ENCODE measurements at regions of chr12 and their contacts with region 1.

Region 1: GRCh38 chr12:57832966-57833365 is 13.6 kb downstream of the CTDSP2 start:
- DNase-seq: no peak
- H3K4me3 ChIP-seq: peak overlapping the region; percentile 7 to 26 (median 18)
- H3K27ac ChIP-seq: peak overlapping the region; percentile 15 to 100 (median 70)
- H3K4me1 ChIP-seq: peaks cover 92 to 100% (median 97%) of the 10 kb centered on the region in 4 donors
- H3K27me3 ChIP-seq: no peaks in the 10 kb centered on the region
- CTCF ChIP-seq: no peak
- EP300 ChIP-seq: no peak
- POLR2A ChIP-seq: no peak

Region 2: GRCh38 chr12:57782608-57783465 is 50.1 kb before region 1 on chr12 and contains the start of gene TSFM:
- intact Hi-C with region 1: loop called (anchors 5 kb)
- DNase-seq: peak; percentile 98
- H3K4me3 ChIP-seq: peak within 1 kb of the TSS; percentile 66 to 99 (median 92)
- H3K27ac ChIP-seq: peak within 1 kb of the TSS; percentile 74 to 82 (median 76)
- H3K4me1 ChIP-seq: peaks cover 14 to 29% (median 20%) of the 10 kb centered on the region in 4 donors
- H3K27me3 ChIP-seq: no peaks in the 10 kb centered on the region
- CTCF ChIP-seq: peak; percentile 98 to 99 (median 98)
- EP300 ChIP-seq: no peak
- POLR2A ChIP-seq: peak; percentile 42
- total RNA-seq, gene TSFM: 17.6 to 38.4 (median 29.2) TPM

Measured in esophagus muscularis mucosa (tissue), 4 donors.